PC-3 (cell line): ENCODE measurements at regions of chr1 and their contacts with region 1.

Region 1: DNA sequence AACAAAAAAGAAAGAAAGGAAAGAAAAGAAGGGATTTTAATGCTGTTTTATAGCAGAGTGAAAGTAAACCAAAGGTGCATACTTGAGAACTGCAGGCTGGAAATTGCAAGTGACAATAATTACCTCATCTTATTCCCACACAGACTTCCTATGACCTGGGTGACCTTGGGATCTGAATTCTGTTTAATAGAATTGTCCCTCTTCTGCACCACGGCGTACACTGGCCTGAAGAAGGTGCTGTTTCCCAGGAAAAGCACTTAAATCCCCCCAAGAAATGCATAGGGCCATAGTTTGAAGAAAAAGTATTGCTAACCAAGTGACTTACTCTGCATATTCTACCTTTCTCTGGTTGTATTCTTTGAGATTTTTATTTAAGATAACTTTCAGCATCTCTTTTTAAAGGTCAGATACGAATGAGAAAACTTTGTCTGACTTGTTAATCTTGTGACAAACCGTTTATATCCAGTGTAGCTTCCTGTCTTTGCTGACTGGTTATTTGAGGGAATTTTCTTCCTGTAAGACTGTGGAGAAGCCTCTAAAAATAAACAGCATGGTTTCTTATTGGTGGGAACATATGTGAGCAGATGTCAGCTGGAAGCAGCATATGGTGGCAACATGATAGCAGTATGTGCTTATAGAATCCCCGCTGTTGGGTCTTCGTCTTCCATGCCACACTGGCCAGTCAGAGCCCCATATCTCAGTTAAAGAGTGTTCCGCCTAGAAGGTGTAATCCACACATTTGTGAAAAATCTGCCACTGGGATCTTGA is 16.3 kb downstream of the TGFB2 start:
- DNase-seq: peak; percentile 71
- ATAC-seq: peak; percentile 78
- H3K4me3 ChIP-seq: no peak overlapping the region
- H3K27ac ChIP-seq: peak overlapping the region; percentile 15
- H3K4me1 ChIP-seq: peaks cover 11% of the 10 kb centered on the region; the same call in 1 of the 2 replicates
- H3K27me3 ChIP-seq: no peaks in the 10 kb centered on the region
- CTCF ChIP-seq: peak; percentile 94

Region 2: GRCh38 chr1:218135371-218135770 is 226.1 kb before region 1 on chr1:
- CTCF ChIA-PET with region 1: no interaction called
- POLR2A ChIA-PET with region 1: no interaction called
- intact Hi-C with region 1: no loop called
- DNase-seq: no peak
- ATAC-seq: no peak
- H3K4me3 ChIP-seq: no peak overlapping the region
- H3K27ac ChIP-seq: no peak overlapping the region
- H3K4me1 ChIP-seq: no peaks in the 10 kb centered on the region
- H3K27me3 ChIP-seq: no peaks in the 10 kb centered on the region
- CTCF ChIP-seq: no peak

Region 3: GRCh38 chr1:218281275-218281674 is 80.2 kb before region 1 on chr1:
- CTCF ChIA-PET with region 1: no interaction called
- POLR2A ChIA-PET with region 1: no interaction called
- intact Hi-C with region 1: no loop called
- DNase-seq: no peak
- ATAC-seq: no peak
- H3K4me3 ChIP-seq: no peak overlapping the region
- H3K27ac ChIP-seq: no peak overlapping the region
- H3K4me1 ChIP-seq: peaks cover 12% of the 10 kb centered on the region
- H3K27me3 ChIP-seq: no peaks in the 10 kb centered on the region
- CTCF ChIP-seq: peak; percentile 40; the same call in 1 of the 2 replicates

Region 4: DNA sequence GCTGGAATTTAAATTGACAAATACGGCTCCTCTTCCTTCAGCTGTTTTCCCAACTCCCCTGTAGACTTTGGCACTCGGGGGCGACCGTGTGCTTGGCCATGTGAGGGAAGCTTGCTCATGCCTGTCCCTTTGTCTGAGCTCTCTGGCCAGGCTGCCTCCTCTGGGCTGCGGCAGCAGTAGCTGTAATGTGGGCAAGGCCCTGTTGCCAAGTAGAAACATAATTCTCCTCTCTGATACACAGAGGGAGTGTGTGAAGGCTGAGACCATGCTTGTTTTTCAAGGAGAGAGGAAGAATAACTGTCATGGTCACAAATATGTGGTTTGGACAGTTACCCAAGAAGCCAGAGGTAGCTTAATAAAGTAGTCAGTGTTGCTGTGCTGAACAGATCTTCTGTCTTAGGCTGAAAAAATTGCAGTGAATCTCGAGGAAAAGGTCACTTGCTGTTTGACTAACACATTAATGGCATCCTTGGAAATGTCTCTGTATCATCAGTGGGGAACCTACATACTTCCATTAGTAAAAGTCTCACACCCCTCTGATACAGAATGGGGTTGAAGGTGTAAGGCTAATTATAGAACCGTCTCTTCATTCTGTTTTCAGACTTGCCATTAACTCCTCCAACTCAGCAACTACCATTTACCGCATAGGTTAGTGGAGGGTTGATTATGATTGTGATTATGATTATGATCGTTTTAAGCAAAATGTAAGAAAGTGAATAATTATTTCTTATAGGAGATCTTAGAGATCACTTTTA is 78.2 kb after region 1 on chr1:
- CTCF ChIA-PET with region 1: no interaction called
- POLR2A ChIA-PET with region 1: no interaction called
- intact Hi-C with region 1: loop called (anchors 5 kb)
- DNase-seq: no peak
- ATAC-seq: peak; percentile 36
- H3K4me3 ChIP-seq: no peak overlapping the region
- H3K27ac ChIP-seq: no peak overlapping the region
- H3K4me1 ChIP-seq: peaks cover 14% of the 10 kb centered on the region
- H3K27me3 ChIP-seq: no peaks in the 10 kb centered on the region
- CTCF ChIP-seq: no peak

Region 5: DNA sequence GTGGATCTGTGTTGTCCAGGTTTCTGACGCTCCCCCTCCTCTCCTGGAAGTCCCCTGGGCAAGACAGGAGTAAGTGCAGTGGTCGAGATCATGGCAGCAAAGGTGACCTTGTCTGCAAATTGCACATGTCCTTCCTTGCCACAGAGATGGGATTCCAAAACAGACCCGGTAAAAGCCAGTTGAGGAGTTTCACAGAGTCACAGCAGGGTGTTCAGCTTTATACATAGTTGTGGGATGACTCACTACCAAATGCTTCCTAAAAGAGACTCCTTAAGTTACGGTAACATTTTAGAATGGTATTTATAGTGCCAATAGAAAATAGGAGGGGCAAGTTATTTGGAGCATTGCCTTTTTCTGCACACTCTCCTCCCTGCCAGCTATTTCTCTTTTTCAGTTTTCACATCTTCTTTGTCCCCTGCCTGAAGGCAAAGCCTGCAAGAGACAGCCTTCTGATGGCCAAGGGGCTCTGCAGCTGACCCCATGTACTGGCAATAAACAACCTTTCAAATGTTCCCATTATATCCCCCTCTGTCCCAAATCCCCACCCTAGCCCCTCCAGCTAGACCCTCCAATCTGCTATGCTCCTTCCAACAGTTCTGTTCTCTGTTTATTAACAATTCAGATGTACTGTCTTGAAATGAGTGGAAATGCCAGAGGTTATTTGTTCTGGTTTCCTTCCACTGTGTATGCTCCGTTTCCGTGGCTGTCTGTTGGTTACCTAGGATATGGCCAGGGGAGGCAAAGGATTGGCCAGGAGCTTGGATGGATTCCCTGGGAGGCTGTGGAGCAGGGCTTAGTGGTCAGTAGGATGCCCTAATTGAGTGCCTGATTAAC is 98.6 kb after region 1 on chr1:
- CTCF ChIA-PET with region 1: interaction called, 3 read pairs
- POLR2A ChIA-PET with region 1: interaction called, 3 read pairs
- intact Hi-C with region 1: loop called (anchors 5 kb)
- DNase-seq: peak; percentile 99
- ATAC-seq: peak; percentile 95
- H3K4me3 ChIP-seq: peak overlapping the region; percentile 31
- H3K27ac ChIP-seq: peak overlapping the region; percentile 56
- H3K4me1 ChIP-seq: peaks cover 38% of the 10 kb centered on the region
- H3K27me3 ChIP-seq: no peaks in the 10 kb centered on the region
- CTCF ChIP-seq: no peak

Region 6: DNA sequence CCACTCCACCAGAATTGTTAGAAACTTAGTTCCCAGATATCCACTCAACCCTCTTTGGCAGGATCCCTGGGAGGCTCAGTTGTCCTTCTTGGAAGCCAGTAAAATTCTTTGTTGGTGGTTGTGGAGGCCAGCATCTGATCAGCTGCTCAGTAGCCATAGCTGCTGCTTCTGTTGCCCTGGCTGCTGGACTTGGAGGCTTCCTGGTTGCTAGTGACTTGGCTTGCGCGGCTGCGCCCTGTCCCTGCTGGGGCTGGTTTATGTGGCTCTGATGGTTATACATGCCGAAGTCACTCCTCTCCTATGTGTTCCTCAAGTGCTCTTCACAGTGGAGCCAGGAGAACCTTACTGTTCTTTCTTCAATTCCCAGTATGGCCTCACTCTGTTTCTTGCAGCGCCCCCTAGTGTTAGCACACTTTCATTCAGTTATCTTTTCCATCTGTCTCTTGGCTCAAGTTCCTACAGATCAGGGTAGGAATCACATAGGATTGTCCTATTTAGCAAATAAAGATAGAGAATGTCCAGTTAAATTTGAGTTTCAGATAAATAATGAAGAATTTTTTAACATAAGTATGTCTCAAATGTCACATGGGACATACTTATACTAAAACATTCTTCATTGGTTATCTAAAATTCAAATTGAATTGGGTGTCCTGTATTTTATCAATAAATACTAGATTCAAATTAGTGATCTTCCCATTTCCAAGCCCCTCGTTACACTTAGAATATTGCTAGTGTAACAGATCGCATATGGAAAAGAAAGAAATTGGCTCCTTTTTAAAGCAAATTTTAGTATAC is 160.1 kb after region 1 on chr1:
- CTCF ChIA-PET with region 1: no interaction called
- POLR2A ChIA-PET with region 1: no interaction called
- intact Hi-C with region 1: loop called (anchors 1 kb)
- DNase-seq: peak; percentile 88
- ATAC-seq: peak; percentile 65; the same call in 1 of the 2 replicates
- H3K4me3 ChIP-seq: no peak overlapping the region
- H3K27ac ChIP-seq: no peak overlapping the region
- H3K4me1 ChIP-seq: no peaks in the 10 kb centered on the region
- H3K27me3 ChIP-seq: no peaks in the 10 kb centered on the region
- CTCF ChIP-seq: peak; percentile 99

Region 7: GRCh38 chr1:218557731-218558130 is 196.2 kb after region 1 on chr1:
- CTCF ChIA-PET with region 1: no interaction called
- POLR2A ChIA-PET with region 1: no interaction called
- intact Hi-C with region 1: loop called (anchors 1 kb)
- DNase-seq: peak; percentile 93
- ATAC-seq: peak; percentile 83
- H3K4me3 ChIP-seq: no peak overlapping the region
- H3K27ac ChIP-seq: no peak overlapping the region
- H3K4me1 ChIP-seq: peaks cover 11% of the 10 kb centered on the region
- H3K27me3 ChIP-seq: no peaks in the 10 kb centered on the region
- CTCF ChIP-seq: no peak

Region 8: GRCh38 chr1:218592688-218593087 is 231.2 kb after region 1 on chr1:
- CTCF ChIA-PET with region 1: no interaction called
- POLR2A ChIA-PET with region 1: interaction called, 4 read pairs
- intact Hi-C with region 1: loop called (anchors 1 kb)
- DNase-seq: peak; percentile 93
- ATAC-seq: peak; percentile 90
- H3K4me3 ChIP-seq: no peak overlapping the region; the same call in 1 of the 2 replicates
- H3K27ac ChIP-seq: peak overlapping the region; percentile 55
- H3K4me1 ChIP-seq: peaks cover 19% of the 10 kb centered on the region
- H3K27me3 ChIP-seq: no peaks in the 10 kb centered on the region
- CTCF ChIP-seq: no peak

Region 9: GRCh38 chr1:218658899-218659298 is 297.4 kb after region 1 on chr1:
- CTCF ChIA-PET with region 1: no interaction called
- POLR2A ChIA-PET with region 1: no interaction called
- intact Hi-C with region 1: loop called (anchors 5 kb)
- DNase-seq: peak; percentile 95
- ATAC-seq: peak; percentile 72
- H3K4me3 ChIP-seq: no peak overlapping the region
- H3K27ac ChIP-seq: peak overlapping the region; percentile 71
- H3K4me1 ChIP-seq: peaks cover 64% of the 10 kb centered on the region
- H3K27me3 ChIP-seq: no peaks in the 10 kb centered on the region
- CTCF ChIP-seq: no peak